ENCODE measurements at regions of chr18 and their contacts with region 1.

Region 1: GRCh38 chr18:51811883-51812282 is 528.1 kb upstream of the DCC start:
- DNase-seq: no peak
- ATAC-seq: no peak

Region 2: DNA sequence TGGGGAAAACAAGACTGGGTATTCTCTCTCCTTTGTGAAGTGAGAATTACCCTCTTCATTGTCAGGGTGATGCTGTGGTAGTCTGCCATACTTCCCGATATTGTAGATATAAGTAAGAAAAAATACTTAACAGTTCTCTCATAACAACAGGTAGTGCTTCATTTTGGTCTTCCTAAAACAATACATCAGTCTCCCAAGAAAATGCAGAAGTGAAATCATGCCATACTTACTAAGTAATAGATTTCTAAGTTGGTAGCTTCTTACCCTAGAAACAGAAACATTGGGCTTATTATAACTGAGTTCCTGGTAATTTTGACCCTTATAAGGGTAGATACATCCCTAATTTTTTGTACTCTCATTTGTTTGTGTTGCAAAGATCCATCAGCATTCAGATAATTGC is 67.4 kb after region 1 on chr18:
- intact Hi-C with region 1: loop called (anchors 10 kb)
- DNase-seq: no peak
- ATAC-seq: no peak